Vagina (tissue), 2 donors: ENCODE measurements at regions of chr5 and their contacts with region 1.

Region 1: DNA sequence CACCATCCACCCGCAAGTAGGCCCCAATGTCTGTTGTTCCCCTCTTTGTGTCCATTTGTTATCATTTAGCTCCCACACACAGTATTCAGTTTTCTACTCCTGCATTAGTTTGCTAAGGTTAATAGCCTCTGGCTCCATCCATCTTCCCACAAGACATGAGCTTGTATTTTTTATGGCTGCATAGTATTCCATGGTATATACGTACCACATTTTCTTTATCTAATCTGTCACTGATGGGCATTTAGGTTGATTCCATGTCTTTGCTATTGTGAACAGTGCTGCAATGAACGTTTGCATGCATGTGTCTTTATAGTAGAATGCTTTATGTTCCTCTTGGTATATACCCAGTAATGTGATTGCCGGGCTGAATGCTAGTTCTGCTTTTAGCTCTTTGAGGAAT is 150.4 kb downstream of the DCP2 start:
- DNase-seq: no peak
- H3K4me3 ChIP-seq: no peak overlapping the region
- H3K27ac ChIP-seq: no peak overlapping the region
- H3K4me1 ChIP-seq: peaks cover 3% of the 10 kb centered on the region
- H3K27me3 ChIP-seq: no peaks in the 10 kb centered on the region
- CTCF ChIP-seq: no peak
- POLR2A ChIP-seq: no peak

Region 2: GRCh38 chr5:112878760-112879159 is 248.3 kb before region 1 on chr5:
- intact Hi-C with region 1: no loop called
- DNase-seq: no peak
- H3K4me3 ChIP-seq: no peak overlapping the region
- H3K27ac ChIP-seq: no peak overlapping the region
- H3K4me1 ChIP-seq: peaks cover 17% of the 10 kb centered on the region
- H3K27me3 ChIP-seq: no peaks in the 10 kb centered on the region
- CTCF ChIP-seq: no peak
- POLR2A ChIP-seq: no peak

Region 3: GRCh38 chr5:113142186-113142585 is 15.2 kb after region 1 on chr5:
- intact Hi-C with region 1: loop called (anchors 1 kb)
- DNase-seq: no peak
- H3K4me3 ChIP-seq: no peak overlapping the region
- H3K27ac ChIP-seq: no peak overlapping the region
- H3K4me1 ChIP-seq: peaks cover 28% of the 10 kb centered on the region
- H3K27me3 ChIP-seq: no peaks in the 10 kb centered on the region
- CTCF ChIP-seq: no peak
- POLR2A ChIP-seq: no peak